A549 (cell line): ENCODE measurements at regions of chr7 and their contacts with region 1.

Region 1: GRCh38 chr7:33895025-33895804 is 10.1 kb upstream of the BMPER start:
- DNase-seq: peak; percentile 72 to 80
- ATAC-seq: peak; percentile 99 to 100
- H3K4me3 ChIP-seq: no peak overlapping the region
- H3K27ac ChIP-seq: no peak overlapping the region
- H3K4me1 ChIP-seq: peaks cover 4% of the 10 kb centered on the region; the same call in 2 of the 3 replicates
- CTCF ChIP-seq: peak; percentile 80
- EP300 ChIP-seq: no peak
- POLR2A ChIP-seq: no peak
- RAD21 ChIP-seq: peak; percentile 74 to 83

Region 2: DNA sequence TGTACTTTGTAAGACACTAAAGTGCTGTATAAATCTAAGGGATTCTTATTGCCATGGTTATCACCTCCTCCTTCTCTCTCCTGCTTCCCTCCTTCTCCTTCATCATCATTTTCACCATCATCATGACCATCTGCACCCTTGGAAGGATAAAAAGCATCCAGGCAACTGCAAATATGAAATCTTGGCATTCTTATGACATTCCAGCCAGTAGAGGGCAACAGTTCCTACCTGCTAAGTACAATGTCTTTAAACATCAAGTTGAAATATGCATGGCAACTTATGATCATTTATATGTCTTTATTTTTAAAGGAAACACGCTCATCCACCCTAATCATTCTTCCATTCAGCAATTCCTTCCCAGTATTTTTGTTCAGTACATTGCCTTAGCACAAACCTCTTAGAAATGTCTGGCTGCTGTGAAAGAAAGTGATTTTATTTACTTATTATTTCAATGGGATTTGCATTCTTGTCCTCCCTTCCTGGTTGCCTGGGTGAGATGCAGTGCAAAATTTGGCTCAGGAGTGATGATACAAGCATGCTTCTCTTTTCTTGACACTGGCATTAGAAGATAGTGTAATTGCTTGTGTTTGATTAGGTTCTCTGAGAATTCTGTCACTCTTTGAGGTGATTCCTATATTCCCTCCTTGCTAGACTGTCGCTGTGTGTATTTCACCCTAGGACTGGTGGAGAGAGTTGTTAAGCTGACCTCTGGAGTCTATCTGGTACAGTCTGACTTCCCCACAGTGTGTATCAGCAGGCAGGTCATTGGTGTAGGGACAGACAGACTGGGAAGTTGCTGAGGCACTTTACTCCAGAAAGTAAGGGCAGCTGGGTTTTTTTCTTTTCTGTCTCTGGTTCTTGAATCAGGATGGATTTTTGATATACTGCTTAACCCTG is 178.4 kb before region 1 on chr7:
- CTCF ChIA-PET with region 1: interaction called, 17 read pairs
- POLR2A ChIA-PET with region 1: no interaction called
- DNase-seq: peak; percentile 14 to 68
- ATAC-seq: peak; percentile 51 to 77; a peak in 3 of 6 replicates
- H3K4me3 ChIP-seq: no peak overlapping the region
- H3K27ac ChIP-seq: 0 out of 6 replicates have a peak overlapping the region, but pooled peaks of 1 of the 2 experiments have one; percentile 5
- H3K4me1 ChIP-seq: peaks cover 11% of the 10 kb centered on the region
- CTCF ChIP-seq: peak; percentile 93
- EP300 ChIP-seq: no peak
- POLR2A ChIP-seq: no peak
- RAD21 ChIP-seq: peak; percentile 61 to 68

Region 3: GRCh38 chr7:33757562-33758165 is 137.6 kb before region 1 on chr7:
- CTCF ChIA-PET with region 1: interaction called, 19 read pairs
- POLR2A ChIA-PET with region 1: no interaction called
- DNase-seq: peak; percentile 16 to 40
- ATAC-seq: no peak
- H3K4me3 ChIP-seq: no peak overlapping the region
- H3K27ac ChIP-seq: no peak overlapping the region
- H3K4me1 ChIP-seq: 0 out of 3 replicates have a peak, but pooled peaks cover 4% of the 10 kb centered on the region
- CTCF ChIP-seq: peak; percentile 70
- EP300 ChIP-seq: no peak
- POLR2A ChIP-seq: no peak
- RAD21 ChIP-seq: peak; percentile 54 to 62

Region 4: DNA sequence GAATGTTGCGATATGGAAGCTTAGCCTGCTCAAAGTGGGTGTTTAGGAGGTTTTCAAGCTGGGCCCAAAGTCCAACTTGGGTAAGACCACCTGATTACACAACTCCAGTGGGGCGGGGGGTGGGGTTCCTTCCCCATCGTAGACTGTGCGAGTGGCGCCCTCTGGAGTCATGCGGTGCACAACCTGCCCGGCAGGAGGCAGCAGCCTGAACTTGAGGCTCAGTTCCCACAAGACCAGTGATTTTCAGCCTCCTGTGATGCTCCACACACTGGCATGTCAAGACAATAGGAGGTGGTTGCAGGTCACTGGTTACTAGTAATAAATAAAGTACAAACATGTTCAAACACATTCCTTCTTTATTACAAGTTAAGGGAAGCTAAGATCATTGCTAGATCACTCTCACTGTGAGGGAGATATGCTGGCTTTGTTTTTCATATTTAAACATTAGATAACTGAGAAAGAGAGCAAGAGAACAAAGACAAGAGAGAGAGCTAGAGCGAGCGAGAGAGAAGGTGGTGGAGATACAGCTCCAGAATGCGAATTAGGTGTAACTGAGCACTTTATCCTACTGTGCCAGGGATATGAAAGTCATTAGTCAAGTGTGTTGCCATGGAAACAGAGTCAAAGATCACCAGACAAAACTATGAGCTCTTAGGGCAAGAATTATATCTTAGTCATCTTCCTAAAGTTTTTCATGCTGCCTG is 87.3 kb before region 1 on chr7:
- CTCF ChIA-PET with region 1: interaction called, 13 read pairs
- POLR2A ChIA-PET with region 1: no interaction called
- DNase-seq: peak; percentile 18 to 62
- ATAC-seq: peak; percentile 78 to 82
- H3K4me3 ChIP-seq: no peak overlapping the region
- H3K27ac ChIP-seq: peak overlapping the region; percentile 39 to 49; a peak in 5 of 6 replicates
- H3K4me1 ChIP-seq: peaks cover 28% of the 10 kb centered on the region
- CTCF ChIP-seq: peak; percentile 45; the same call in 2 of the 3 replicates
- EP300 ChIP-seq: no peak
- POLR2A ChIP-seq: no peak
- RAD21 ChIP-seq: peak; percentile 47 to 55